CD8-positive, alpha-beta memory T cell (primary cell): ENCODE measurements at regions of chr10 and their contacts with region 1.

Region 1: GRCh38 chr10:104268716-104269645 is at the start of gene GSTO2:
- DNase-seq: peak; percentile 97 to 99 (median 99)
- H3K4me3 ChIP-seq: peak within 1 kb of the TSS; percentile 85
- H3K4me3 Mint-ChIP-seq: peak within 1 kb of the TSS; percentile 89 to 98 (median 96)
- H3K27ac ChIP-seq: peak within 1 kb of the TSS; percentile 82
- H3K27ac Mint-ChIP-seq: peak within 1 kb of the TSS; percentile 84 to 100 (median 98)
- H3K4me1 ChIP-seq: peaks cover 50% of the 10 kb centered on the region
- H3K4me1 Mint-ChIP-seq: peaks cover 43 to 58% (median 54%) of the 10 kb centered on the region in 3 donors
- H3K27me3 ChIP-seq: no peaks in the 10 kb centered on the region
- H3K27me3 Mint-ChIP-seq: peaks cover 1% of the 10 kb centered on the region in 2 donors
- total RNA-seq, gene GSTO2: 0.93 to 1.1 TPM

Region 2: GRCh38 chr10:104067525-104067924 is 201.5 kb before region 1 on chr10:
- CTCF ChIA-PET with region 1: no interaction called
- POLR2A ChIA-PET with region 1: no interaction called
- DNase-seq: no peak
- H3K4me3 ChIP-seq: no peak overlapping the region
- H3K4me3 Mint-ChIP-seq: no peak overlapping the region
- H3K27ac ChIP-seq: no peak overlapping the region
- H3K27ac Mint-ChIP-seq: no peak overlapping the region
- H3K4me1 ChIP-seq: no peaks in the 10 kb centered on the region
- H3K4me1 Mint-ChIP-seq: peaks cover 0 to 2% (median 0%) of the 10 kb centered on the region in 3 donors
- H3K27me3 ChIP-seq: no peaks in the 10 kb centered on the region
- H3K27me3 Mint-ChIP-seq: peaks cover 4 to 17% of the 10 kb centered on the region in 2 donors

Region 3: GRCh38 chr10:104254493-104255310 is 14.3 kb before region 1 on chr10 and contains the start of gene GSTO1:
- CTCF ChIA-PET with region 1: interaction called, 57 read pairs
- POLR2A ChIA-PET with region 1: interaction called, 13 read pairs
- DNase-seq: peak; percentile 40 to 70 (median 47)
- H3K4me3 ChIP-seq: peak within 1 kb of the TSS; percentile 64
- H3K4me3 Mint-ChIP-seq: peak within 1 kb of the TSS; percentile 91 to 99 (median 95)
- H3K27ac ChIP-seq: peak within 1 kb of the TSS; percentile 76
- H3K27ac Mint-ChIP-seq: peak within 1 kb of the TSS; percentile 84 to 99 (median 96)
- H3K4me1 ChIP-seq: peaks cover 41% of the 10 kb centered on the region
- H3K4me1 Mint-ChIP-seq: peaks cover 34 to 53% (median 49%) of the 10 kb centered on the region in 3 donors
- H3K27me3 ChIP-seq: no peaks in the 10 kb centered on the region
- H3K27me3 Mint-ChIP-seq: peaks cover 8 to 11% of the 10 kb centered on the region in 2 donors
- total RNA-seq, gene GSTO1: 122 TPM

Region 4: DNA sequence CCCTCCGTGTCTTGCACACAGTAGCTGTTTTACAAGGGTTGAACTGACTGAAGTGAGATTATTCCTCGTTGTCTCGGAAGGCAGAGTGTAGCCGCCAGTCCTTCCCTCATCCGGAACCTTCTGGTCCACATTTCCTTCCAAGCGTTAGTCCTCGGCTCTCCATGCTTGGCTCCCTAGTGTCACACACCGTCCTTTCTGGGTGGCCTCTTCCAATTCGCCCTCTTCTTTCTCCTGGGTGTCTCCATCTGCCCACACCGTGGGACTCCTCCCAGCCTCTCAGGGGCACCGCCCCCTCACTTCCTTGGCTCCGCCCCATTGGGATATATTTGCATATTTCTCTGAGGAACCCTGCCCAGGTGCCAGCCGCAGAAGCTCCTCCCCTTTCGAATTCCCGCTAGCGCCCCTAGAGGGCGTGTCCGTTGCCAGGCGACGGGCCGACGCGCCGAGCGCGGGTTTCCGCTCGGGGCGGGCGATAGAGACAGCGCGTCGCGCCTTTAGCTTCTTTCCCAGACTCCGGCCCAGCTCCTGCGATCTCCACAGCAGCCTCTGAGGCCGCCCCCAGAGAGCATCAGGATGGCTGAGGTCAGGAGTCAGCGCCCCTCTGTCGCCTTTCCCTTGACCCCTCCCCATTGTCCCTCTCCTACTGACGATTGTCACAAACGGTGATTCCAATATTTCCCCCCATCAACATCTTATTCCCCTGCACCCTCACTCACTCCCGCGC is 84.5 kb after region 1 on chr10 and contains the start of gene CFAP58:
- CTCF ChIA-PET with region 1: interaction called, 25 read pairs
- POLR2A ChIA-PET with region 1: interaction called, 4 read pairs
- DNase-seq: peak; percentile 87 to 93 (median 88)
- H3K4me3 ChIP-seq: peak within 1 kb of the TSS; percentile 67
- H3K4me3 Mint-ChIP-seq: peak within 1 kb of the TSS in 2 of 7 donors; percentile 75 to 81
- H3K27ac ChIP-seq: no peak within 1 kb of the TSS
- H3K27ac Mint-ChIP-seq: peak within 1 kb of the TSS in 5 of 8 donors; percentile 13 to 87 (median 84)
- H3K4me1 ChIP-seq: peaks cover 20% of the 10 kb centered on the region
- H3K4me1 Mint-ChIP-seq: peaks cover 0 to 20% (median 0%) of the 10 kb centered on the region in 3 donors
- H3K27me3 ChIP-seq: no peaks in the 10 kb centered on the region
- H3K27me3 Mint-ChIP-seq: no peaks in the 10 kb centered on the region
- total RNA-seq, gene CFAP58: 0.07 TPM in 1 of 2 experiments, not detected in the other

Region 5: GRCh38 chr10:104925232-104925851 is 656.4 kb after region 1 on chr10:
- CTCF ChIA-PET with region 1: no interaction called
- POLR2A ChIA-PET with region 1: no interaction called
- DNase-seq: peak in 1 of 5 donors; percentile 2
- H3K4me3 ChIP-seq: no peak overlapping the region
- H3K4me3 Mint-ChIP-seq: no peak overlapping the region
- H3K27ac ChIP-seq: no peak overlapping the region
- H3K27ac Mint-ChIP-seq: peak overlapping the region in 1 of 8 donors; percentile 39
- H3K4me1 ChIP-seq: no peaks in the 10 kb centered on the region
- H3K4me1 Mint-ChIP-seq: no peaks in the 10 kb centered on the region
- H3K27me3 ChIP-seq: no peaks in the 10 kb centered on the region
- H3K27me3 Mint-ChIP-seq: peaks cover 0 to 6% of the 10 kb centered on the region in 2 donors